Common myeloid progenitor, CD34-positive (primary cell): ENCODE measurements at regions of chr9 and their contacts with region 1.

Region 1: DNA sequence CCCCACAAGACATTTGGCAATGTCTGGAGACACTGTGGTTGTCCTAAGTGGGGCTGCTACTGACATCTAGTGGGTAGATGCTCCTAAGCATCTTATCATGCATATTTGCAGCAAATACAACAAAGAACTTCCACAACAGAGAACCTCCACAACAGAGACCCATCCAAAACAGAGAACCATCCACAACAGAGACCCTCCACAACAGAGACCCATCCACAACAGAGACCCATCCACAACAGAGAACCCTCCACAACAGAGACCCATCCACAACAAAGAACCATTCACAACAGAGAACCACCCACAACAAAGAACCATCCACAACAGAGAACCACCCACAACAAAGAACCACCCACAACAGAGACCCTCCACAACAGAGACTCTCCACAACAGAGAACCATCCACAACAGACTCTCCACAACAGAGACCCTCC is 32.8 kb downstream of the ARPC5L start:
- DNase-seq: peak; percentile 75 to 88 (median 87)
- H3K4me3 ChIP-seq: no peak overlapping the region
- H3K27ac ChIP-seq: no peak overlapping the region
- H3K4me1 ChIP-seq: no peaks in the 10 kb centered on the region
- H3K27me3 ChIP-seq: no peaks in the 10 kb centered on the region

Region 2: GRCh38 chr9:124861342-124862229 is 33.2 kb before region 1 on chr9 and contains the starts of genes ARPC5L and RPL35:
- CTCF ChIA-PET with region 1: interaction called, 12 read pairs
- POLR2A ChIA-PET with region 1: no interaction called
- DNase-seq: peak; percentile 95 to 98 (median 98)
- H3K4me3 ChIP-seq: peak within 1 kb of the TSS; percentile 78 to 94 (median 84)
- H3K27ac ChIP-seq: peak within 1 kb of the TSS; percentile 91 to 96
- H3K4me1 ChIP-seq: peaks cover 11 to 35% (median 26%) of the 10 kb centered on the region in 4 experiments
- H3K27me3 ChIP-seq: no peaks in the 10 kb centered on the region

Region 3: DNA sequence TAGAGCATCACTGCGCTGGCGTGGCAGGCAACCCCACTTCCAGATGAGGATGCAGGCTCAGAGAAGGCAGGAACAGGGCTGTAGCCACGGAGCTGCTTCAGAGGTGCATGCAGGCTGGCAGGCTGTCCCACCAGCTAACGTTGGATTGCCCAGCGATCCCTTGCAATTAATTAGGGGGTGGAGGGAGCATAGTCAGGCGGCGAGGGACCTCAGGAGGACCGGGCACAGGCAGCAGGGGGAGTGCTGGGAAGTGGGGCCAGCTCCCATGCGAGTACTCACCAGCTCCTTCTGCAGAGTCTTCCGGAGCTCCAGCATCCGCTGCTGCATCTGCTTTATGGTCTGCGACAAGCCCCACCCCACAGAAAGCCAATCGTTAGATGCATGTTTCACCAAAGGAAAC is 12.5 kb before region 1 on chr9:
- CTCF ChIA-PET with region 1: interaction called, 13 read pairs
- POLR2A ChIA-PET with region 1: no interaction called
- DNase-seq: no peak
- H3K4me3 ChIP-seq: no peak overlapping the region
- H3K27ac ChIP-seq: no peak overlapping the region
- H3K4me1 ChIP-seq: no peaks in the 10 kb centered on the region
- H3K27me3 ChIP-seq: no peaks in the 10 kb centered on the region

Region 4: DNA sequence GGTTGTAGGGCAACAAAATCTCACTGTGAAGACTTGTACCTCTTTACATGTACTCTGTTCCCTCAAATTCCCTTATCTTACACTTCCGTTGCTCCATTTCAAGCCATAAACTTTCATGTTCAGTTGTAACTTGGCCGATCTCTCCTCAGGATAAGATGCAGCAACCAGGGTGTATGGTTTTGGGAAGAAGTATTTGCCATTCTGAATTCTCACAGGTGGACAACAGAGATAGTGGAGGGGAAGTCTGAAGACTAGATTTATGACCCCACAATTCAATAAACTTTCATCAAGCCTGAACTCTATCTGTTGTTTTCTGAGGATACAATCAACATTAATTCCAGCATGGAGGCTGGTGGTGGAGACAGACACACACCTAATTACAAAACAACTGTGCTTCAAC is 18.6 kb after region 1 on chr9:
- CTCF ChIA-PET with region 1: no interaction called
- POLR2A ChIA-PET with region 1: no interaction called
- DNase-seq: no peak
- H3K4me3 ChIP-seq: no peak overlapping the region
- H3K27ac ChIP-seq: no peak overlapping the region
- H3K4me1 ChIP-seq: no peaks in the 10 kb centered on the region
- H3K27me3 ChIP-seq: no peaks in the 10 kb centered on the region

Region 5: DNA sequence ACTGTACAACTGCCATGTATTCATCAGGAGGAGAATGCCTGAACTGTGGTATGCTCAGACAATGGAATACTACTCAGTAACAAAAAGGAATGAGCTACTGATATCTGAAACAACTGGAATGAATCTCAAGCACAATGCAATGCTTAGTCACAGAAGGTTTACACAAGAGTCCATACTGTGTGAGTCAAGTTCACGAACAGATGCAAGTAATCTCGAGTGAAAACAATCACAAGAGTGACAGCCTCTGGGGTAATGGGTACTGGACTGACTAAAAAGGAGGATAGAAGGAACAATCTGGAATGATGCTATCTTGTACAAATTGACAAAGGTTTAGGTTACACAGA is 65.6 kb after region 1 on chr9:
- CTCF ChIA-PET with region 1: no interaction called
- POLR2A ChIA-PET with region 1: no interaction called
- DNase-seq: no peak
- H3K4me3 ChIP-seq: no peak overlapping the region
- H3K27ac ChIP-seq: no peak overlapping the region
- H3K4me1 ChIP-seq: peaks cover 0 to 6% (median 4%) of the 10 kb centered on the region in 4 experiments
- H3K27me3 ChIP-seq: no peaks in the 10 kb centered on the region

Region 6: GRCh38 chr9:125538092-125538473 is 643.3 kb after region 1 on chr9:
- CTCF ChIA-PET with region 1: no interaction called
- POLR2A ChIA-PET with region 1: no interaction called
- DNase-seq: no peak
- H3K4me3 ChIP-seq: no peak overlapping the region
- H3K27ac ChIP-seq: no peak overlapping the region
- H3K4me1 ChIP-seq: no peaks in the 10 kb centered on the region
- H3K27me3 ChIP-seq: no peaks in the 10 kb centered on the region